IMR-90 (cell line): ENCODE measurements at regions of chr17 and their contacts with region 1.

Region 1: DNA sequence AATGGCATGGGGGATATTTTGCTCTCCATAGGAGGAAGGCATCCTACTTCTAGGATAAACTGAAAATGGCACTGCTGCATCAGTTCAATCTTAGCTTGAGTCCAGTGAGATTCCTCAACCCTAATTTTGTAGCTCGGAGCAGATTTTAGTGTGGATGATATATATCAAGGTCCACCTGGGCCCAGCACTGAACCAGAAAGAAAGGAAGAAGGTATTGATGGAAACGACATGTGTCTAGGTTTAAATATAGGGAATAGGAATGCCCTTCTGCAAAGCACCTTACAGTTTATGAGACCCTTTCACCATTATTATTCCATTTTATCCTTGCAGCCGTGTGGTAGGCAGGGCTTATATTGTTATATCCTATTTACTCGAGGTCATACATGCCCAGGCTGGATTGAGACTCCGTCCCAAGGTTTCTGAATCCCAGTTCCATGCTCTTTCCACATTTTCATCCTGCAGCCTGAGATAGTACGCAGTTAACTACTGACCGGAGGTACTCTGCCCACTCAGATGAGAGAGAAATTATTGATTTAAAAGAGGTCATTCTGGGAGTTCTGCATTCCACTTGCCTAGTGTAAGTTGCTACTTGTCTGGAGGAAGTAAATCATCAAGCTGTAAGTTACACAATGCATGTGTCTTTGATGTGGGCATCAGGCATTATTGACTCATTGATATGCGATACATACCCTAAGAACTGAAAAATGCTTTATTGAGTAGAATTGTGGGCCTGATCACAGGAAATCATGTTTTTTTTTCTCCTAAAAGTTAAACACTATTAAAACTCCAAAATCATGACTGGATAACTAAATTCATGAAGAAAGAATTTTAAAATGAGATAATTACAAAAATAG is 10.1 kb downstream of the KRT39 start:
- DNase-seq: peak; percentile 100
- ATAC-seq: peak; percentile 88
- H3K4me3 ChIP-seq: no peak overlapping the region
- H3K27ac ChIP-seq: no peak overlapping the region
- H3K4me1 ChIP-seq: peaks cover 16% of the 10 kb centered on the region
- H3K27me3 ChIP-seq: no peaks in the 10 kb centered on the region
- CTCF ChIP-seq: no peak
- POLR2A ChIP-seq: no peak
- RAD21 ChIP-seq: no peak; the same call in 1 of the 2 replicates

Region 2: GRCh38 chr17:40915199-40915661 is 41.4 kb before region 1 on chr17:
- CTCF ChIA-PET with region 1: no interaction called
- POLR2A ChIA-PET with region 1: no interaction called
- dilution Hi-C with region 1: no loop called
- in situ Hi-C with region 1: no loop called
- intact Hi-C with region 1: loop called (anchors 1 kb)
- DNase-seq: peak; percentile 98
- ATAC-seq: peak; percentile 83
- H3K4me3 ChIP-seq: no peak overlapping the region
- H3K27ac ChIP-seq: no peak overlapping the region
- H3K4me1 ChIP-seq: peaks cover 12% of the 10 kb centered on the region
- H3K27me3 ChIP-seq: no peaks in the 10 kb centered on the region
- CTCF ChIP-seq: no peak
- POLR2A ChIP-seq: no peak
- RAD21 ChIP-seq: peak; percentile 10; the same call in 1 of the 2 replicates

Region 3: GRCh38 chr17:41377546-41377945 is 420.9 kb after region 1 on chr17:
- CTCF ChIA-PET with region 1: no interaction called
- POLR2A ChIA-PET with region 1: interaction called, 10 read pairs
- dilution Hi-C with region 1: no loop called
- in situ Hi-C with region 1: no loop called
- intact Hi-C with region 1: no loop called
- DNase-seq: peak; percentile 37
- ATAC-seq: peak; percentile 10; the same call in 1 of the 2 replicates
- H3K4me3 ChIP-seq: no peak overlapping the region
- H3K27ac ChIP-seq: no peak overlapping the region; the same call in 1 of the 2 replicates
- H3K4me1 ChIP-seq: peaks cover 27% of the 10 kb centered on the region
- H3K27me3 ChIP-seq: no peaks in the 10 kb centered on the region
- CTCF ChIP-seq: no peak
- POLR2A ChIP-seq: no peak
- RAD21 ChIP-seq: no peak